MCF 10A (cell line): ENCODE measurements at regions of chrX and their contacts with region 1.

Region 1: GRCh38 chrX:136028251-136028984 is 43.2 kb downstream of the SLC9A6 start:
- DNase-seq: peak; percentile 71
- H3K4me3 Mint-ChIP-seq: no peak overlapping the region
- H3K27ac Mint-ChIP-seq: no peak overlapping the region
- H3K4me1 Mint-ChIP-seq: no peaks in the 10 kb centered on the region
- H3K27me3 Mint-ChIP-seq: peaks cover 54% of the 10 kb centered on the region
- CTCF ChIP-seq: peak; percentile 58

Region 2: GRCh38 chrX:134670134-134670924 is 1358.1 kb before region 1 on chrX:
- CTCF ChIA-PET with region 1: no interaction called
- POLR2A ChIA-PET with region 1: no interaction called
- intact Hi-C with region 1: no loop called
- DNase-seq: peak; percentile 62
- H3K4me3 Mint-ChIP-seq: no peak overlapping the region
- H3K27ac Mint-ChIP-seq: peak overlapping the region; percentile 82
- H3K4me1 Mint-ChIP-seq: peaks cover 23% of the 10 kb centered on the region
- H3K27me3 Mint-ChIP-seq: no peaks in the 10 kb centered on the region
- CTCF ChIP-seq: no peak

Region 3: GRCh38 chrX:136162831-136163570 is 134.6 kb after region 1 on chrX:
- CTCF ChIA-PET with region 1: interaction called, 109 read pairs
- POLR2A ChIA-PET with region 1: interaction called, 5 read pairs
- intact Hi-C with region 1: loop called (anchors 1 kb)
- DNase-seq: peak; percentile 70
- H3K4me3 Mint-ChIP-seq: no peak overlapping the region
- H3K27ac Mint-ChIP-seq: no peak overlapping the region
- H3K4me1 Mint-ChIP-seq: peaks cover 6% of the 10 kb centered on the region
- H3K27me3 Mint-ChIP-seq: peaks cover 82% of the 10 kb centered on the region
- CTCF ChIP-seq: peak; percentile 70

Region 4: GRCh38 chrX:136200466-136200865 is 172.0 kb after region 1 on chrX:
- CTCF ChIA-PET with region 1: interaction called, 20 read pairs
- POLR2A ChIA-PET with region 1: no interaction called
- intact Hi-C with region 1: no loop called
- DNase-seq: peak; percentile 52
- H3K4me3 Mint-ChIP-seq: no peak overlapping the region
- H3K27ac Mint-ChIP-seq: no peak overlapping the region
- H3K4me1 Mint-ChIP-seq: peaks cover 9% of the 10 kb centered on the region
- H3K27me3 Mint-ChIP-seq: peaks cover 73% of the 10 kb centered on the region
- CTCF ChIP-seq: peak; percentile 34

Region 5: GRCh38 chrX:136268051-136269048 is 239.9 kb after region 1 on chrX:
- CTCF ChIA-PET with region 1: interaction called, 48 read pairs
- POLR2A ChIA-PET with region 1: interaction called, 3 read pairs
- intact Hi-C with region 1: loop called (anchors 1 kb)
- DNase-seq: peak; percentile 55
- H3K4me3 Mint-ChIP-seq: no peak overlapping the region
- H3K27ac Mint-ChIP-seq: no peak overlapping the region
- H3K4me1 Mint-ChIP-seq: peaks cover 7% of the 10 kb centered on the region
- H3K27me3 Mint-ChIP-seq: peaks cover 16% of the 10 kb centered on the region
- CTCF ChIP-seq: peak; percentile 67

Region 6: GRCh38 chrX:136577552-136577951 is 549.1 kb after region 1 on chrX:
- CTCF ChIA-PET with region 1: interaction called, 29 read pairs
- POLR2A ChIA-PET with region 1: no interaction called
- intact Hi-C with region 1: loop called (anchors 2 kb)
- DNase-seq: peak; percentile 51
- H3K4me3 Mint-ChIP-seq: no peak overlapping the region
- H3K27ac Mint-ChIP-seq: no peak overlapping the region
- H3K4me1 Mint-ChIP-seq: no peaks in the 10 kb centered on the region
- H3K27me3 Mint-ChIP-seq: peaks cover 35% of the 10 kb centered on the region
- CTCF ChIP-seq: peak; percentile 56

Region 7: DNA sequence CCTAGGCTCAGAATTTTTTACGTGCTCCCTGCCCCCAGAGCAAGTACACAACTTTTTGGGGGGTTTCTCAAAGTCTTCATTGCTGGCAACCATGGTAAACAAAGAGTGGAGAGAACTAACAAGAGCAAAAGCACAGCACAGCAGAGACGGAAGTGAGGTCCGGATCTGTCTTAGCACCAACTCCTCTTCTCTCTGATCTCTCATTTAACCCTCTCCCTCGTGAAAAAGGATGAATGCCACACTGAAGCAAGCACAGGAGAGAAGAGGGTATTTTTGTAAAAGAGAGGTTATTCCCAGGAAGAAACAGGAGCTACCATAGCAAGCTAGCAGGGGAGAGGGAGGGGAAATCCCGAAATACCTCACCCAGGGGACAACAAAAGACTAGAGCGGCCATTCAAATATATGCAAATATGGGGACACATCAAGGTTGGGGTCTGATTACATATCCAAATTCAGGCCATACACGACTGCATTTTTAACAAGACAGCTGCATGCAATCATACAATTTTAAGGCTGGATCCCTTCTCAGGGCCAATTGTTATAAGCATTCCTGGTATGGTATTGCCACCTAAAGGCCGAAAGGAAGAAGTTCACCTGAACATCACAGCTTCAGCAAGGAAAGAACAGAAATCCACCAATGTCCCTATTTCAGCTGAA is 666.1 kb after region 1 on chrX:
- CTCF ChIA-PET with region 1: interaction called, 42 read pairs
- POLR2A ChIA-PET with region 1: interaction called, 3 read pairs
- intact Hi-C with region 1: loop called (anchors 1 kb)
- DNase-seq: peak; percentile 52
- H3K4me3 Mint-ChIP-seq: no peak overlapping the region
- H3K27ac Mint-ChIP-seq: no peak overlapping the region
- H3K4me1 Mint-ChIP-seq: no peaks in the 10 kb centered on the region
- H3K27me3 Mint-ChIP-seq: peaks cover 49% of the 10 kb centered on the region
- CTCF ChIP-seq: peak; percentile 79